PC-9 (cell line): ENCODE measurements at regions of chr19 and their contacts with region 1.

Region 1: DNA sequence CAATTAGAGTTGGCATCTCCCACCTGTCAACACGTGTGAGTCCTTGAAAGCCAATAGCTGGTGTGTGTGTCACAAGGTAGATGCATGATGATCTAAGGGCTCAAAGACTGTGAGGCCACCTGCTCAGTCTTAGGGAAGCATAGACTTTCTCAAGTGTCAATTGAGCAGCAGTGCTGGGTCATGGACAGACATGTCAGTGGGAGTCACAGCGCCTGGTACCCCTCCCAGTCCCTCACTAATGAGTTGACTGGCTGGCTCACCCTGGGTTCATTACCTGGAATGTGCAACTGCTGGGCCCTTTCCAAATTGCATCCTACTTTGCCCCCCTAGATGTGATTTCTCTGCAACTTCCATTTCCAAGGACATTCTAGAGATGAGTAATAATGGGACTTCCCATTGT is 9.1 kb upstream of the PSG6 start:
- DNase-seq: no peak
- H3K4me3 ChIP-seq: no peak overlapping the region
- H3K27ac ChIP-seq: no peak overlapping the region
- H3K4me1 ChIP-seq: no peaks in the 10 kb centered on the region
- H3K27me3 ChIP-seq: no peaks in the 10 kb centered on the region
- CTCF ChIP-seq: no peak

Region 2: GRCh38 chr19:42420055-42420544 is 506.7 kb before region 1 on chr19:
- CTCF ChIA-PET with region 1: no interaction called
- POLR2A ChIA-PET with region 1: no interaction called
- intact Hi-C with region 1: no loop called
- DNase-seq: peak in 1 of 2 experiments; percentile 41
- H3K4me3 ChIP-seq: no peak overlapping the region
- H3K27ac ChIP-seq: no peak overlapping the region
- H3K4me1 ChIP-seq: peaks cover 28% of the 10 kb centered on the region
- H3K27me3 ChIP-seq: no peaks in the 10 kb centered on the region
- CTCF ChIP-seq: peak; percentile 71

Region 3: DNA sequence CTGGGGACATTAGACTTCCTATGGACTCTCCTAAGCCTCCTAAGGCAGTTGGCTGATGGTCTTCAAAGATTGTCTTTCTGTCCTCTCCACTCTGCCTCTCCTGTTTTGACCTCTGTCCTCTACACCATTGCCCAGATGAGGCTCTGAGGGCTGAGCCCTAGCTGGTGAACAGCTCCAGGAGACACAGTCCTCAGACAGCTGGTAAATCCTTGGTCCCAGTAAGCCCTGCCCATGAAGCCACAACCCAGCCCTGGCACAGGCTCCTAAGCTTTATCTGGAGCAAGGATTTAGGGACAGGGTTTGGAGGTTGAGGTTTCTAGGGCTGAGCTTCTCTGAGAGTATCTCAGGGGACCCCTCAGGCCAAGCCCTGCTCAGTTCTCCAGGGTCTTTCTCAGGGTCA is 153.4 kb after region 1 on chr19:
- CTCF ChIA-PET with region 1: no interaction called
- POLR2A ChIA-PET with region 1: no interaction called
- intact Hi-C with region 1: loop called (anchors 5 kb)
- DNase-seq: no peak
- H3K4me3 ChIP-seq: no peak overlapping the region
- H3K27ac ChIP-seq: no peak overlapping the region
- H3K4me1 ChIP-seq: peaks cover 8% of the 10 kb centered on the region
- H3K27me3 ChIP-seq: no peaks in the 10 kb centered on the region
- CTCF ChIP-seq: no peak